ENCODE measurements at regions of chr1 and their contacts with region 1.

Region 1: DNA sequence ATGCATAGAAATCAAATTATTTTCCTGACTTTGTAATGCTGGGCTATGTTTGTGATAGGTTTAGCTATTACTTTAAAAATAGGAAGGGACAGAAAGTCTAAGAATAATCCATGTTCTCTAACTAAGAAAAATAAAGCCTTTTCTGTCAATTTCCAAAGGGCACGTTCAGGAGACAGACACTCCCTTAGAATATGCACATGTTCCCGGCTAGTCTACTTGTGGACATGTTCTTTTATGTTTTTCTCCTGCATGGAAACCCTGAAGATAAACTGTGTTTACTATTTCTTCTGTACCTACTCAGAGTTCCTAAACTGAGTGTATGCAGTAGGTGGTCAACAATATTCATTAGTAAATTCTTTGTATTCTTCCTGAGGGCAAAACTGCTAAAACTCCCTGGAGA is 12.5 kb downstream of the PSMB4 start:
- DNase-seq: no peak
- CTCF ChIP-seq: no peak

Region 2: GRCh38 chr1:150683914-150684313 is 728.0 kb before region 1 on chr1:
- CTCF ChIA-PET with region 1: no interaction called
- POLR2A ChIA-PET with region 1: no interaction called
- DNase-seq: no peak
- CTCF ChIP-seq: no peak

Region 3: GRCh38 chr1:151384584-151384983 is 27.3 kb before region 1 on chr1:
- CTCF ChIA-PET with region 1: no interaction called
- POLR2A ChIA-PET with region 1: no interaction called
- DNase-seq: no peak
- CTCF ChIP-seq: no peak

Region 4: DNA sequence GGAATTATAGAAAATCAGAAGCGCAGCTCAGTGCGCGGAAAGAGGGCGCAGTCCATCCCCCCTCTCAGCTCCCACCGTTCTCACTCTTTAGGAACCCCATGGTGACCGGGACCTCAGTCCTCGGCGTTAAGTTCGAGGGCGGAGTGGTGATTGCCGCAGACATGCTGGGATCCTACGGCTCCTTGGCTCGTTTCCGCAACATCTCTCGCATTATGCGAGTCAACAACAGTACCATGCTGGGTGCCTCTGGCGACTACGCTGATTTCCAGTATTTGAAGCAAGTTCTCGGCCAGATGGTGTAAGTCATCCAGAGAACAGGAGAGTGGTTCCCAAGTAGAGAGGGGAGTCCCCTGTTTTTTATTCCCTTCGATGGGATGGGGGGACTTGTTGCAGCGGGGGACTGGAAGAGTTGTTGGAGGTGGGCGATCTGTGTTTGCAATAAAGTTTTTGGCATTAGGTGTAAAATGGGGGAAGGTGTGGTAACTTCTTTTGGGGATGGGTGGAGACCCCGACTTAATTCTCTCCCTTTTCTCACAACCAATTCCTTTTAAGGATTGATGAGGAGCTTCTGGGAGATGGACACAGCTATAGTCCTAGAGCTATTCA is 11.9 kb before region 1 on chr1:
- CTCF ChIA-PET with region 1: interaction called, 13 read pairs
- POLR2A ChIA-PET with region 1: interaction called, 6 read pairs
- DNase-seq: no peak
- CTCF ChIP-seq: no peak